Heart right ventricle (tissue), 16 donors: ENCODE measurements at regions of chrX and their contacts with region 1.

Region 1: DNA sequence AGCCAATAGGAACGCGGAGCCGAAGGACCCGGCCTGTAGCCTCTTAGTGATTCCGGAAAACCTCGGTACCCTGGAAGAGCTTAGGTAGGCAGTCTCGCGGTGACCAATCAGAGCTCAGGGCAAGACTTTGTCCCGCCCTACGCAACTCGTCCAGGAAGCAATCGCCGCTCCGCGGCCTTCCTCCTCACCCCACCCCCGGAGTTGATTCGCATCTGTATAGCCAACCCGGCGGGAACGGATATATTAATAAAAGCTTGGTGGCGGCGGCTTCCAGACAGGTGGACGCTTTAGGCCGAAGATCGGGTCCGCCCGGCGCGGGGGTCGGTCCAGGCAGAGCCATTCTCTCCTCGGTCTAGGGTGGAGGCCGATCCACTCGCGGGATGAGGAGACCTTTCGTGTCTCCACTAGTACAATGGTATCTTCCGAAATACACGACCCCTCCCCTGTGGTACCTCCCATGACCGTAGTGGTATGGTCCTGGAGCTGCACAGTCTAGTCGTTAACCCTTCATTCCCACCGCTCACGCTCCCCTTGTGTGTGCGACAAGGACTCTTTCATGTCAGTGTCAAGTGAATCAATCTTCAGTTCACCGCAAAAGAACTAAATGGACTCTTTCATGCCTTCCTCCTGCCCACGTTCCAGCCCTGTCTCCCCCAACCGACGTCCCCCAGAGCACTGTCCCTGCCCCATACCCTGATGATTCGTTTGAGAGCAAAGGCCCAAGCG is 24.2 kb upstream of the GLOD5 start:
- DNase-seq: peak; percentile 87 to 93
- ATAC-seq: peak; percentile 99 to 100 (median 100)
- H3K4me3 ChIP-seq: peak overlapping the region; percentile 35 to 75 (median 68)
- H3K27ac ChIP-seq: peak overlapping the region; percentile 73 to 95 (median 92)
- H3K4me1 ChIP-seq: peaks cover 0 to 14% (median 0%) of the 10 kb centered on the region in 9 donors
- H3K27me3 ChIP-seq: no peaks in the 10 kb centered on the region
- CTCF ChIP-seq: no peak

Region 2: GRCh38 chrX:48676106-48676892 is 61.1 kb before region 1 on chrX:
- intact Hi-C with region 1: loop called in 1 of 10 experiments (anchors 5 kb)
- DNase-seq: peak; percentile 86 to 90
- ATAC-seq: peak; percentile 97 to 100 (median 99)
- H3K4me3 ChIP-seq: peak overlapping the region; percentile 65 to 85 (median 76)
- H3K27ac ChIP-seq: peak overlapping the region; percentile 77 to 94 (median 91)
- H3K4me1 ChIP-seq: peaks cover 0 to 16% (median 0%) of the 10 kb centered on the region in 9 donors
- H3K27me3 ChIP-seq: no peaks in the 10 kb centered on the region
- CTCF ChIP-seq: no peak

Region 3: GRCh38 chrX:48703642-48704481 is 33.5 kb before region 1 on chrX:
- intact Hi-C with region 1: loop called in 2 of 10 experiments (anchors 5 kb)
- DNase-seq: no peak
- ATAC-seq: peak in 6 of 8 donors; percentile 67 to 89 (median 72)
- H3K4me3 ChIP-seq: no peak overlapping the region
- H3K27ac ChIP-seq: peak overlapping the region in 6 of 10 donors; percentile 25 to 60 (median 42)
- H3K4me1 ChIP-seq: peaks cover 0 to 12% (median 0%) of the 10 kb centered on the region in 9 donors
- H3K27me3 ChIP-seq: peaks cover 0 to 4% (median 0%) of the 10 kb centered on the region in 7 donors
- CTCF ChIP-seq: peak in 2 of 9 donors; percentile 17 to 33